ENCODE measurements at regions of chr14 and their contacts with region 1.

Region 1: DNA sequence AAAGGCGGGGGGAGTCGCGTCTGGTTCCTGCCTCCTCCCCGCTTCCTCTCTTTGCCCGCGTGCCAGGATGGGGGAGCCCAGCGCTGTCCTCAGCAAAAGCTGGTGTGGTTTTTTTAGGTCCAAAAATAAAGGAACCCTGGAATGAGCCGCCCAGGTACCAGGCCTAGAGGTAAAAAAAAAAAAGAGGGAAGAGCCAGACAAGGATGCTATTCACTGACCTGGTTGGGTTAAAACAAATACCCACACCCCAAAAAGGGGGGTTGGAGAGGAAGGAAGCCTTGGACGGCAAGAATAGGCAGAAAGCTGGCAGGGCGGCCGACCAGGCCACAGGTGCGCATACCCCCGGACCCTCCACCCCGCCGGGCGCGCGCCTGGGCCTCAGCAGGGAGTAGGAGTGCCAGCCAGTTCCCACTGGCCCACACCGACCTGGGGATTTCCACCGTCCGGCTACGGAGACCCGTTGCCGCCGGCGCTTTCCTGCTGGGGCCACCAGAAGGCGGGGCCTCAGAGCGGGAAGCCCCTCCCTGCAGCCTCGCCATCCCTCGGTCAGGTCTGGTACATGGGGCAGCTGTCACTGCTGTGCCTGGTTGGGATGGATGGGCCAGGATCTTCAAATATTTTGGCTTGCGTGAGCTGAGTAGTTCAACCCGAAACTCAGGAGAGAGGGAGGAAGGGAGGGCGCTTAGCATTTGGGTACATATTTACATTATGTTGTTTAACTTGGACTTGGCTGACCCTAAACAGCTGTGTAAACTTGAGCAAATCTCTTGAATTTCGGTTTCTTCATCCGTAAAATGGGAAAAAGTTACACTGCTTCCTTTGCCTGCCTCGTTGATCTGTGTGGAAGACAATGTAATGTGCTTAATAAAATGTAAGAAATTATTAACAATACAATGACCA is 5.4 kb upstream of the IRF2BPL start:
- DNase-seq: peak; percentile 63 to 90 (median 72)
- H3K4me3 ChIP-seq: peak overlapping the region; percentile 71 to 84
- H3K4me3 Mint-ChIP-seq: peak overlapping the region; percentile 91 to 94 (median 92)
- H3K27ac ChIP-seq: peak overlapping the region; percentile 98
- H3K27ac Mint-ChIP-seq: peak overlapping the region; percentile 94 to 99 (median 98)
- H3K4me1 ChIP-seq: peaks cover 93% of the 10 kb centered on the region
- H3K4me1 Mint-ChIP-seq: peaks cover 53 to 87% (median 70%) of the 10 kb centered on the region in 4 donors
- H3K27me3 ChIP-seq: no peaks in the 10 kb centered on the region
- H3K27me3 Mint-ChIP-seq: no peaks in the 10 kb centered on the region

Region 2: GRCh38 chr14:76956316-76957090 is 77.4 kb before region 1 on chr14:
- CTCF ChIA-PET with region 1: interaction called, 11 read pairs
- POLR2A ChIA-PET with region 1: interaction called, 132 read pairs
- intact Hi-C with region 1: no loop called
- DNase-seq: peak; percentile 83 to 97 (median 85)
- H3K4me3 ChIP-seq: peak overlapping the region; percentile 61 to 64
- H3K4me3 Mint-ChIP-seq: peak overlapping the region; percentile 81 to 96 (median 88)
- H3K27ac ChIP-seq: peak overlapping the region; percentile 94
- H3K27ac Mint-ChIP-seq: peak overlapping the region; percentile 87 to 99 (median 98)
- H3K4me1 ChIP-seq: peaks cover 72% of the 10 kb centered on the region
- H3K4me1 Mint-ChIP-seq: peaks cover 37 to 75% (median 53%) of the 10 kb centered on the region in 4 donors
- H3K27me3 ChIP-seq: no peaks in the 10 kb centered on the region
- H3K27me3 Mint-ChIP-seq: no peaks in the 10 kb centered on the region